ENCODE measurements at regions of chr12 and their contacts with region 1.

Region 1: GRCh38 chr12:113462117-113462774 is 9.4 kb downstream of the LHX5 start:
- DNase-seq: no peak
- ATAC-seq: peak; percentile 92
- H3K4me3 ChIP-seq: no peak overlapping the region
- H3K27ac ChIP-seq: no peak overlapping the region
- H3K4me1 ChIP-seq: no peaks in the 10 kb centered on the region
- H3K27me3 ChIP-seq: peaks cover 13 to 22% of the 10 kb centered on the region in 2 experiments; a peak in 3 of 4 replicates
- CTCF ChIP-seq: peak; percentile 75 to 93 (median 88)
- EP300 ChIP-seq: no peak
- POLR2A ChIP-seq: no peak
- RAD21 ChIP-seq: peak; percentile 51

Region 2: GRCh38 chr12:113445544-113446171 is 16.6 kb before region 1 on chr12:
- CTCF ChIA-PET with region 1: interaction called, 11 read pairs
- POLR2A ChIA-PET with region 1: no interaction called
- RAD21 ChIA-PET with region 1: interaction called, 3 read pairs
- SMC1A ChIA-PET with region 1: no interaction called
- in situ Hi-C with region 1: no loop called
- intact Hi-C with region 1: no loop called
- DNase-seq: no peak
- ATAC-seq: peak; percentile 91
- H3K4me3 ChIP-seq: no peak overlapping the region
- H3K27ac ChIP-seq: no peak overlapping the region
- H3K4me1 ChIP-seq: no peaks in the 10 kb centered on the region
- H3K27me3 ChIP-seq: peaks cover 0 to 5% of the 10 kb centered on the region in 2 experiments; a peak in 2 of 4 replicates
- CTCF ChIP-seq: no peak
- EP300 ChIP-seq: no peak
- POLR2A ChIP-seq: no peak
- RAD21 ChIP-seq: no peak